ENCODE measurements at regions of chrX and their contacts with region 1.

Region 1: GRCh38 chrX:74291964-74292807 is 11.8 kb upstream of the ZCCHC13 start:
- DNase-seq: peak; percentile 86
- H3K4me3 ChIP-seq: peak overlapping the region; percentile 97
- H3K27ac ChIP-seq: peak overlapping the region; percentile 93
- H3K4me1 ChIP-seq: peaks cover 9% of the 10 kb centered on the region
- CTCF ChIP-seq: peak; percentile 62

Region 2: DNA sequence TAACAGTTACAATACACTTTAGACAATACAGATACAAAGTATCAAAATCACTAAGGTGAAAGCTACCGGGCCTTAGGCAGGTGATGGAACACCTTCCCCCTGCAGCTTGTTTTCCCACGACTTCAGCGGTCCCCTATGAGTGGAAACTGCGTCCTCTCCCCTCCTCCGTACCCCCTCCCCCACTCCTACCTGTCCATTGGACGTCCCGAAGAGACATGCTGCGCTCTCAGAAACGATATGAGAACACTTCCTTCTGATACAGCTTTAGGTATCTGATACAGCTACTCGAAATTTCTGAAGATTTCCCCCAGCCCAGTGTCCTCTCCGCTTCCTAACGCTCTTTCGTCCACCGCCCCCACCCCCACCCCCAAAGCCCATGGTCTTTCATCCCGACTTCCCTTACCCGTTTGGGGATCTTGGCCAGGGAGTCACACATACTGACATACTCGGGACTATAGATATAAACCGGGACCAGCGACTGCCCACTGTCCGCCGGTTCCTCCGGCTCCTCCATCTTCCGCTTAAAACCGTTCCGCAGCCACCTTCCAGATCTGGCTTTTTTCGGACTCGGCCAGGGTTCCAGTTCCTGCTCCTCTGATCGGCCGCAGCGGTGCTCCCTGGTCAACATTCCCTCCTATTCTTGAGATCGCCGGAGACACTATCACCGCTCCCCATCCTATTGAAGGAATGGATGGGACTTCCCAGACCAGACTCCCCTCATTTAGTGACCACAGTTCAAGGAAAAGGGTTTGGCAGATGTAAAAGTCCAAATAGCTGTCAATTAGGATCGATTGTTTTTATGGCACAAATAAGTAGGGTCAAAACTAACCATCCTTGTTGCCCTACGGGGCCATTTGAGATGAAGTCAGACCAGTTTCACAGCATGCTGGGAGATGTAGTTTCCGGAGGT is 1719.7 kb before region 1 on chrX and contains the start of gene HDAC8:
- CTCF ChIA-PET with region 1: no interaction called
- POLR2A ChIA-PET with region 1: no interaction called
- intact Hi-C with region 1: loop called (anchors 10 kb)
- DNase-seq: peak; percentile 79
- H3K4me3 ChIP-seq: peak within 1 kb of the TSS; percentile 84
- H3K27ac ChIP-seq: peak within 1 kb of the TSS; percentile 39
- H3K4me1 ChIP-seq: peaks cover 5% of the 10 kb centered on the region
- CTCF ChIP-seq: no peak
- total RNA-seq, gene HDAC8: 29.9 and 32.5 TPM in 2 replicates

Region 3: DNA sequence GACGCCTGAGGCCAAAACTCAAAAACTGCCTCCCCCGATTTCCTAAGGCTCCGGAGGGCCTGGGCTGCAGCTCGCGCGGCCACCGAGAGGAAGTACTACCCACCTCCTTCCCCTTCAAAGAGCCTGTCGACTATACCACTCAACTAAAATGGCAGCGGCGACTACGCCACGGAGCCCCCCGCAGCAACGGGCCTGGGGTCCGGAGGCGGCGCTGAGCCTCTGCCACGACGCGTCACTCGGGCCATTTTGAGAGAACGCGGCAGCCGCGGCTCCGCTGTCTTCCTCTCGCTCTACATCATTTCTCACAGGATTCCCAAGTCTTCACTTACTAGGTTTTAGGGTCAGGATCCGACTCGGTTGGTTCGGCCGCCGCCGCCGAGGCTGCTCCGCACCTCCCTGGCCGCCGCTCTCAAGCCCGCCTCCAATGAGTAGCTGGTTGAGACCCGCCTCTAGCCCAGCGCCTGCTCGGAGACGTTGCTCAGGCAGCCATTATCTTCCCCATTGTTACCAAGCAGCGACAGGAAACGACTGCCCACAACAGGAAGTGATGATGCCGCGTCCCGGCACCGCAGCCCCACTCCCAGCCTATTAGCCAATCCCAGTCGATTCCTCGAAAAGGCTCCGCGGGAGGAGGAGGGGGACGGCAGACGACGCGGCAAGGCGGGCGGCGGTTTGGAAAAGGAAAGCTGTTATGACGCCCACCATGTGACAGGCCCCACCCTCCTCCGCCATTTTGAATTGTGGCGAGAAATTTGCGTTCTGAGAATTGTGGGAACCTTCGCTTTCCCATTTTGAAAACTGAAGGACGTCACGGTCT is 322.1 kb after region 1 on chrX and contains the start of gene RLIM:
- CTCF ChIA-PET with region 1: no interaction called
- POLR2A ChIA-PET with region 1: no interaction called
- intact Hi-C with region 1: loop called (anchors 5 kb)
- DNase-seq: peak; percentile 91
- H3K4me3 ChIP-seq: peak within 1 kb of the TSS; percentile 89
- H3K27ac ChIP-seq: peak within 1 kb of the TSS; percentile 93
- H3K4me1 ChIP-seq: peaks cover 18% of the 10 kb centered on the region
- CTCF ChIP-seq: no peak
- total RNA-seq, gene RLIM: 22.7 and 23.4 TPM in 2 replicates

Measured in OCI-LY7 (cell line).